ENCODE measurements at regions of chr5 and their contacts with region 1.

Region 1: DNA sequence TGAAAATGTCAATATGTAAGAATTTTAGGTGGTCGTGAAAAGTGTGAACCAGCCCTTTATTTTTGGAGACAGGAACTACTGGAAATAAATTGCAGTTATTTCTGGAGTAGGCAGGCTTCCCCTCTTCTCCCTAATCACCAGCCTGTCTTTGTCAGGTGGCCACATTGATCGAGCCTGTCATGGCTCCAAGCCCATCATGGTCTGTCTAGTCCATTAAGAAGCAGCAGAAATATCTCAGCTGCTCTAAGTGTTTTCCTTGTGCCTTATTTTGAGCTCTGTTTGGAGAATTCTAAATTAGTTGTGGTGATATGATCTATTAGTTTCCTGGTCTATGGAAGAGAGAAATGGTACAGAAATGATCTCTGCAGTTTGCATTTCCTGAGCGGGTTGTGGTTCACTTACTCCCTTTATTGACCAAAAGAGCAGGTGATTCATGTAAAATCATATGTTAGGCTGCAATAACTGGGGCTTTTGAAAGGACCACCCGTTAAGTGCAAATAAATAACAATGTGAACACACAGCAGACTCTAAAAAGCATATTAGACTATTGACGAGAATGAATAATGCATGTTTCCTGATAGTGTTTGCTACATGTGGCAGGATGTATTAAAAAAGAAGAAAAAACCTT is 42.3 kb downstream of the BASP1 start:
- DNase-seq: no peak
- ATAC-seq: no peak
- H3K4me3 ChIP-seq: no peak overlapping the region
- H3K27ac ChIP-seq: no peak overlapping the region
- H3K4me1 ChIP-seq: peaks cover 2 to 6% of the 10 kb centered on the region in 2 donors
- H3K27me3 ChIP-seq: no peaks in the 10 kb centered on the region

Region 2: GRCh38 chr5:16934123-16934522 is 325.6 kb before region 1 on chr5:
- intact Hi-C with region 1: no loop called
- DNase-seq: peak in 1 of 2 donors; percentile 71
- ATAC-seq: no peak
- H3K4me3 ChIP-seq: peak overlapping the region in 1 of 2 donors; percentile 50
- H3K27ac ChIP-seq: no peak overlapping the region
- H3K4me1 ChIP-seq: no peaks in the 10 kb centered on the region
- H3K27me3 ChIP-seq: no peaks in the 10 kb centered on the region

Region 3: GRCh38 chr5:17305964-17306716 is 46.4 kb after region 1 on chr5:
- intact Hi-C with region 1: loop called in 1 of 2 experiments (anchors 5 kb)
- DNase-seq: peak; percentile 77 to 79
- ATAC-seq: peak; percentile 80
- H3K4me3 ChIP-seq: no peak overlapping the region
- H3K27ac ChIP-seq: peak overlapping the region in 1 of 2 donors; percentile 25
- H3K4me1 ChIP-seq: peaks cover 0 to 3% of the 10 kb centered on the region in 2 donors
- H3K27me3 ChIP-seq: no peaks in the 10 kb centered on the region

Measured in aorta (tissue), 5 donors.